ENCODE measurements at regions of chr18 and their contacts with region 1.

Region 1: DNA sequence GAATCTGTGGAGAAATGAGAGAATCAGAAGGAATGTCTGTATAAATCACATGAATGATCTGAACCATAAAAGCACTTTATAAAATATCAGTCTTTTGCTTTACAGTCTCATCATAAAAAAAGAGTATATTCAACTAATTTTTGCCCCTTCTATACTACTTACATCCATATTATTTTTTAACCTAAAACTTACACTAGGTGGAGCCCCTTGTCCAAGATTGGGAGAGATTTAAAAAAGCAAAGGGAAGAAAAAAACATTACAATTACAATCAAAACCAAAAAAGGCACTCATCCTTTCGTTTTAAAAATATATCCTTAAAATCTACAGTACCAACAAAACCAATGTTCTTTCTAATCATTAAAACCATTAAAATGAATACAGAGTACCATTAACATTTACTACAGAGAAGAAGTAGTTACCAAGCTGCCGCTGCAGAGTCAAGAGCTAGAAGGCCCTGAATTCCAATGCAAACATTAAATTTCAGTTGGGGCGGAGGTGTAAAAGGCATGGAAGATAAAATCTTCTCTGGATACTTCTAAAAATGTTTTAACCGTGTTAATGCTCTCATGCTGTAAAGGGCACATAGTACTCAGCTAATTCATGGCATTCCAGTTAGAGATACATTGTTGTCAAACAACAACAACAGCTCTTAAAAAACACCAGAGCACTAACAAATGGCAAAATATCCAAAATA is 56.7 kb upstream of the EPB41L3 start:
- DNase-seq: peak in 1 of 2 experiments; percentile 26
- H3K4me3 ChIP-seq: no peak overlapping the region
- H3K4me3 Mint-ChIP-seq: no peak overlapping the region
- H3K27ac Mint-ChIP-seq: no peak overlapping the region
- H3K4me1 ChIP-seq: peaks cover 11% of the 10 kb centered on the region; the same call in 1 of the 2 replicates
- H3K4me1 Mint-ChIP-seq: no peaks in the 10 kb centered on the region
- H3K27me3 ChIP-seq: no peaks in the 10 kb centered on the region
- H3K27me3 Mint-ChIP-seq: peaks cover 12% of the 10 kb centered on the region
- CTCF ChIP-seq: peak; percentile 33 to 34

Region 2: GRCh38 chr18:5704847-5705246 is 104.3 kb after region 1 on chr18:
- CTCF ChIA-PET with region 1: no interaction called
- POLR2A ChIA-PET with region 1: no interaction called
- intact Hi-C with region 1: loop called (anchors 5 kb)
- DNase-seq: no peak
- H3K4me3 ChIP-seq: no peak overlapping the region
- H3K4me3 Mint-ChIP-seq: no peak overlapping the region
- H3K27ac Mint-ChIP-seq: no peak overlapping the region
- H3K4me1 ChIP-seq: no peaks in the 10 kb centered on the region
- H3K4me1 Mint-ChIP-seq: no peaks in the 10 kb centered on the region
- H3K27me3 ChIP-seq: no peaks in the 10 kb centered on the region
- H3K27me3 Mint-ChIP-seq: peaks cover under 1% of the 10 kb centered on the region
- CTCF ChIP-seq: no peak

Region 3: GRCh38 chr18:5720132-5720531 is 119.6 kb after region 1 on chr18:
- CTCF ChIA-PET with region 1: no interaction called
- POLR2A ChIA-PET with region 1: no interaction called
- intact Hi-C with region 1: no loop called
- DNase-seq: no peak
- H3K4me3 ChIP-seq: no peak overlapping the region
- H3K4me3 Mint-ChIP-seq: no peak overlapping the region
- H3K27ac Mint-ChIP-seq: no peak overlapping the region
- H3K4me1 ChIP-seq: no peaks in the 10 kb centered on the region
- H3K4me1 Mint-ChIP-seq: no peaks in the 10 kb centered on the region
- H3K27me3 ChIP-seq: no peaks in the 10 kb centered on the region; the same call in 1 of the 2 replicates
- H3K27me3 Mint-ChIP-seq: peaks cover 15% of the 10 kb centered on the region
- CTCF ChIP-seq: no peak

Region 4: DNA sequence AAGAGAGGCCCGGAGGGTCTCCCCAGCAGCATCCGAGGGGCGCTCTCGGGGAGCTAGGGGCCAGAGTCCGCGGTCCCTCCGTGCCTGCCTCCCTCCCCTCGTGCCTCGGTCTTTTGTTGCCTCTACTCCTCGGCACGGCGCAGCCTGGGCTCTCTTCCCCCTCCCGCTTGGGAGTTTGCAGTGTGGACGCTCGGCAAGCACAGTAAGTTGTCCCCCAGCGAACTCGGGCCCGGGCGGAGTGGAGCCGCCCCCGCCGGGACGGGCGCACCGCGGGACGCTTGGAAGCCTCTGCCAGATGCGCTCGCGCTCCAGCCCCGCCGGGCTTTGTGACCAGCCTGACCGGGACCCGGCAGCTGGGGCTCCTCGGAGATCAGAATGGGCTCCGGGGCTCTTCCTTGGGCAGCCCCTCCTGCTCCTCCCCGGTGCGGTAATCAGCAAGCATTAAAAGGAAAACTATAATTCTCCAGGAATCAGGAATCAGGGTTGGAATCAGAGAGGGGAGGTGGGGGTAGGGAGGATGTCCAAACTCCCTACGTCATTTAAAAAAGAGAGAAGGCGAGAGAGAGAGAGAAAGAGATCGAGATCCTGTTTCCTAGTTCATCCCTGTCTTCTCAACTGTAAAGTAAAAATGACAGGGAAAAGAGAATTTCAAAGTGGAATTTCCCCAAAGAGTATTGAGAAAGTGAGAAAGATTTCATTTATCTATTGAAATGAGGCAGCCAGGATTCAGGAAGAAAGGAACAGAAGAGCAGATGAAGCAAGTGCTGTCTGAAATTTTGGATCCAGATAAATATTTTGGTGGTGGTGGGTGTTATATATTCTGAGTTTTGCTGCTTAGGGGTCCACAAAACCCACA is 295.6 kb after region 1 on chr18:
- CTCF ChIA-PET with region 1: no interaction called
- POLR2A ChIA-PET with region 1: no interaction called
- intact Hi-C with region 1: no loop called
- DNase-seq: peak in 1 of 2 experiments; percentile 15
- H3K4me3 ChIP-seq: peak overlapping the region; percentile 12
- H3K4me3 Mint-ChIP-seq: peak overlapping the region; percentile 67
- H3K27ac Mint-ChIP-seq: no peak overlapping the region
- H3K4me1 ChIP-seq: peaks cover 11% of the 10 kb centered on the region
- H3K4me1 Mint-ChIP-seq: peaks cover 11% of the 10 kb centered on the region
- H3K27me3 ChIP-seq: peaks cover 7% of the 10 kb centered on the region; the same call in 1 of the 2 replicates
- H3K27me3 Mint-ChIP-seq: peaks cover 34% of the 10 kb centered on the region
- CTCF ChIP-seq: no peak

Measured in Caco-2 (cell line).